Endothelial cell of umbilical vein (primary cell): ENCODE measurements at regions of chr17 and their contacts with region 1.

Region 1: DNA sequence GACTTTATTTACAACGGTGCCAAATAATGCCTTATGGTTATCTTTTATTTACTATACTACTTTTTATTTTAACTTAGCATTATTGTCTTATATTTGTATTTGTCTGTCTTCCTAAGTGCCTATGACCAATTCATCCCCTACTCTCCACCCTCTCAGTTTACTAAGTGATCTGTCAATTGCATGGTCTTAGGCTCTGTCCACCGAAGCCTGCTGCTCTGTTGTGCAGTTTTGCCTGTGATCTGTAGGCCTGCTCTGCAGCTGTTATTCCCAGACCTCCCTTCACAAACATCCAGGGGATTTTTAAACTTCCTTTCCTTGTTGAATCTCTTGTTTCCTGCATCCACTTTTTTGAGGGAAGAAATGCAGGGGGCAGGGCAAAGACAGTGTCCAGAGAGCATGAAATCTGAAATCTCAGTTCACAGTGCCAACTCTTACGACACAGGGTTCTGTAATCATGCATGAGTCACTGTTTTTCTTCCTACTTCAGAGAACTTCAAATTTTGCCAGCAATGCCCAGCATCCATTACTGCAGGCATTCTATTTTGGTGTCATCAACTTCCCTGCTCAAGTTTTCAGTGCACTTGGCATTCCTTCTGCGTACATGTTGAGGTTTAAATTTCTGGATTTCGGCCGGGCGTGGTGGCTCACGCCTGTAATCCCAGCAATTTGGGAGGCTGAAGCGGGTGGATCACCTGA is 11.4 kb downstream of the SLFN5 start:
- DNase-seq: peak; percentile 98
- H3K4me3 ChIP-seq: no peak overlapping the region
- H3K27ac ChIP-seq: peak overlapping the region; percentile 59
- H3K4me1 ChIP-seq: peaks cover 35% of the 10 kb centered on the region
- H3K27me3 ChIP-seq: no peaks in the 10 kb centered on the region
- CTCF ChIP-seq: no peak
- POLR2A ChIP-seq: no peak

Region 2: GRCh38 chr17:35265566-35266141 is 11.4 kb after region 1 on chr17:
- CTCF ChIA-PET with region 1: interaction called, 13 read pairs
- POLR2A ChIA-PET with region 1: no interaction called
- dilution Hi-C with region 1: no loop called
- intact Hi-C with region 1: no loop called
- DNase-seq: no peak
- H3K4me3 ChIP-seq: no peak overlapping the region
- H3K27ac ChIP-seq: no peak overlapping the region
- H3K4me1 ChIP-seq: no peaks in the 10 kb centered on the region
- H3K27me3 ChIP-seq: no peaks in the 10 kb centered on the region
- CTCF ChIP-seq: no peak
- POLR2A ChIP-seq: no peak

Region 3: GRCh38 chr17:35295686-35296085 is 41.4 kb after region 1 on chr17:
- CTCF ChIA-PET with region 1: no interaction called
- POLR2A ChIA-PET with region 1: no interaction called
- dilution Hi-C with region 1: no loop called
- intact Hi-C with region 1: loop called (anchors 1 kb)
- DNase-seq: peak; percentile 21
- H3K4me3 ChIP-seq: no peak overlapping the region
- H3K27ac ChIP-seq: no peak overlapping the region
- H3K4me1 ChIP-seq: peaks cover 13% of the 10 kb centered on the region
- H3K27me3 ChIP-seq: no peaks in the 10 kb centered on the region
- CTCF ChIP-seq: no peak
- POLR2A ChIP-seq: no peak

Region 4: DNA sequence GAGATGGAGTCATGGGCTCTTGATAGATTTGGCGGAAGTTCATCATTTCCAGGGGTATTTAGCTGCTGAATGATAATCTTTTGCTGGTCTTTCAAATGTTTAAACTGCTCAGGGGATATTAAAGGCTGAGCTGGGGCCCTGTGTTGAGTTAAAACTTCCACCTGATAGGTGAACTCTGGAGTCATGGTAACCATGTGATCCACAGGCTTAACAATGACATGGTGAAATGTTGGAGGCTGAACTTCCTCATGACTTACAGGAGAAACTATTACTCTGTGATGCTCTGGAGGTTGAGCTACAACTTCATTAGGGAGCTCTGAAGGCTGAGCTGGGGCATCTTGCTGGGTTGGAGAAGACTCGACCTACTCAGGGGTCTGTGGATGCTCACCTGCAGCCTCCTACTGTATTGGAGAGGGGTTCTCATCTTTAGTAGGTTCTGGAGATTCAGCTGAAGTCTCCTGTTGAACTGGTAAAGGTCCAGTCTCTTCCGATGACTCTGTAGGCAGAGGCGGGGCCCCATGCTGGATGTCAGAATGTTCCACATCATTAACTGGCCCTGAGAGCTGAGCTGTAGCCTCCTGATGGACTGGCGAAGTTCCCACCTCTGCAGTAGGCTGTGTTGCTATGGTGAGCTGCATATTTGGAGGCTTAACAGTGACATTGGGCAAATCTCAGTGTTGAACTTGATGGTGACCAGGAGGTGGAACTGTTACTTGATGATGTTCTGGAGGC is 652.1 kb after region 1 on chr17:
- CTCF ChIA-PET with region 1: no interaction called
- POLR2A ChIA-PET with region 1: no interaction called
- dilution Hi-C with region 1: no loop called
- intact Hi-C with region 1: no loop called
- DNase-seq: no peak
- H3K4me3 ChIP-seq: no peak overlapping the region
- H3K27ac ChIP-seq: no peak overlapping the region
- H3K4me1 ChIP-seq: no peaks in the 10 kb centered on the region
- H3K27me3 ChIP-seq: no peaks in the 10 kb centered on the region
- CTCF ChIP-seq: no peak
- POLR2A ChIP-seq: no peak